Activated T-helper 1 cell treated with anti-CD3 and anti-CD28 coated beads, Interleukin-12 subunit alpha, Interleukin-12 subunit beta, Interleukin-2, Interleukin-4 antibody, amounts not matched to agents 30 ng/mL and 10 ng/mL and 1 ng/mL, durations not matched to agents 14 hours and 24 hours and 36 hours (primary cell): ENCODE measurements at regions of chr9 and their contacts with region 1.

Region 1: DNA sequence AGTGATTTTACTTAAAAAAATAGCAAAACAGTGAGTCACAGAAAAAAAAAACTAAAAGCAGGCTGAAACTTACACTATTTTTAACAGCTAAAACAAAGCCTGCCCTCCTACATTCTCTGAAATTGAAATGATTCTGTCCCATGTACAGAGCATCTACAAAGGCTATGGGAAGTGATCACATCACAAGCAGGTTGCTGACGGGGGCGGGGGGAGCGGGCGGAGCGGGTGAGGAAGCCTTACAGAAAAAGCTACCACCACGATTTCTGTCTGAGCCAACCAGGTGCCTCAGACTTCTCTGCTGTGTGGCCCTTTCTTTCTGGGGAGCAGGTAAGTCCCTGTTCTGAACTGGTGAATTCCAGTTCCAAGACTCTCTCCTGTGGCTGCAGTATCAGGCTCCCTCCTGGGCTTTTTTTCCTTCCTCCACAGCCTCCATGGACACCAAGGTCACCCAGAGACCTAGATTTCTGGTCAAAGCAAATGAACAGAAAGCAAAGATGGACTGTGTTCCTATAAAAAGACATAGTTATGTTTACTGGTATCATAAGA is 104.9 kb downstream of the ANKRD18B start:
- DNase-seq: no peak
- H3K4me3 Mint-ChIP-seq: no peak overlapping the region
- H3K27ac Mint-ChIP-seq: no peak overlapping the region
- H3K4me1 Mint-ChIP-seq: peaks cover 4% of the 10 kb centered on the region
- H3K27me3 Mint-ChIP-seq: peaks cover 30% of the 10 kb centered on the region

Region 2: GRCh38 chr9:33458444-33458843 is 170.5 kb before region 1 on chr9:
- intact Hi-C with region 1: no loop called
- DNase-seq: no peak
- H3K4me3 Mint-ChIP-seq: peak overlapping the region; percentile 17
- H3K27ac Mint-ChIP-seq: peak overlapping the region; percentile 72
- H3K4me1 Mint-ChIP-seq: peaks cover 46% of the 10 kb centered on the region
- H3K27me3 Mint-ChIP-seq: no peaks in the 10 kb centered on the region

Region 3: GRCh38 chr9:33614001-33614687 is 14.8 kb before region 1 on chr9:
- intact Hi-C with region 1: no loop called
- DNase-seq: no peak
- H3K4me3 Mint-ChIP-seq: no peak overlapping the region
- H3K27ac Mint-ChIP-seq: no peak overlapping the region
- H3K4me1 Mint-ChIP-seq: no peaks in the 10 kb centered on the region
- H3K27me3 Mint-ChIP-seq: peaks cover 11% of the 10 kb centered on the region

Region 4: DNA sequence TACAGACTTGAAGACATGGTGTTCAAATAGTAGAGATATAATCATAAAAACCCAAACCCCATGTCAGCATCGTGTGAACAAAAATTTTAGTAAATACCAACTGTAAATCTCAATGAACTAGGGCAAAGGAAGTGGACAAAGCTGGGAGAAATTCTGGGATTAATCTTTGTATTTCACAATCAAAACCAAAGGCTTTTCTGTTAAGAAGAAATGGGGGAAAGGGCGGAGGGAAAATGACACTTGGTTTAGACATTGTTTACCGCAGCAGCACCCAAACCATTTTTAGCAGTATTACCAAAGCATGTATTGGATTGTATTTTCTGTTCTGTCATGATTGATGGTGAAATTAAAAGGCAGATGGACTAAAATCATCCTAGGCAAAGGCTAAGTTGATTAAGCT is 32.2 kb after region 1 on chr9:
- intact Hi-C with region 1: no loop called
- DNase-seq: no peak
- H3K4me3 Mint-ChIP-seq: no peak overlapping the region
- H3K27ac Mint-ChIP-seq: no peak overlapping the region
- H3K4me1 Mint-ChIP-seq: no peaks in the 10 kb centered on the region
- H3K27me3 Mint-ChIP-seq: peaks cover 25% of the 10 kb centered on the region

Region 5: DNA sequence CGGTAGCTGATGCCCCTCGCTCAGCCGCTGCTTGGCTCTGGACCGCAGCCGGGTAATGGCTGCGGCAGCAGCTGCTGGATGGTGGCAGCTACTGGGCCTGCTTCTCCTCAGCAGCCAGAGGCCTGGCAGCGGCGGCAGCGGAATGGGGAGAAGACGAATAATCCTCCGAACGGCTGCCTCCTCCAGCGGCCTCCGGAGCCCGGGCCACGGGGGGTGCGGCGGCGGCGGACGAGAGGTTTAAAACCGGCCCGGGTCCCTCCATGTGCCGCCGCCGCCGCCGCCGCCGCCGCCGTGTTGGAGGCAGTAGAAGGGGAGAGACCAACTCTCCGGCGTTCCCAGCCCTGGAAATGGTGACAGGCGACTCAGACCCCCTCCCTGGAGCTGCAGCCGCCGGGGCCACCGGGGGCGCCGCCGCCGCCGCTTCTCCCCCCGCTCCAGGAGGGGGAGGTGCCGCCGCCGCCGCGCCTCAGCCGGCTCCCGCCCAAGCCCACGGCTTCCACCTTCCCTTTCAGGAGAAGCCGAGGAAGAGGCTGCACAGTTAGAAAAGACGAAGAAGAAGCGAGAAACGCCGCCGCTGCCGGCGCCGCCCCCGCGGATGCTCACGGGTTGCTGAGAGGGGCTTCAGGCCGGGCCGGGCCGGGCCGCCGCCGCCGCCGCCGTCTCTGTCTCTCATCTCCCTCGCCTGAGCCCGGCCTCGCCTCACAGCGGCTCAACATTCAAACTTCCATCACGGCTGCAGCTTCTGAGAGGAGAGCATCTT is 48.0 kb after region 1 on chr9:
- intact Hi-C with region 1: loop called (anchors 5 kb)
- DNase-seq: peak; percentile 2
- H3K4me3 Mint-ChIP-seq: peak overlapping the region; percentile 91
- H3K27ac Mint-ChIP-seq: peak overlapping the region; percentile 67
- H3K4me1 Mint-ChIP-seq: peaks cover 13% of the 10 kb centered on the region
- H3K27me3 Mint-ChIP-seq: peaks cover 67% of the 10 kb centered on the region